Activated B cell treated with CpG ODN at 0.5 μM for 24 hours (primary cell): ENCODE measurements at regions of chr7 and their contacts with region 1.

Region 1: GRCh38 chr7:100889761-100890634 is 483 bp upstream of the UFSP1 start:
- DNase-seq: peak; percentile 89
- ATAC-seq: peak; percentile 85
- H3K4me3 Mint-ChIP-seq: peak overlapping the region; percentile 87
- H3K27ac Mint-ChIP-seq: peak overlapping the region; percentile 76
- H3K4me1 Mint-ChIP-seq: peaks cover 50% of the 10 kb centered on the region
- H3K27me3 Mint-ChIP-seq: peaks cover 23% of the 10 kb centered on the region
- CTCF ChIP-seq: no peak

Region 2: DNA sequence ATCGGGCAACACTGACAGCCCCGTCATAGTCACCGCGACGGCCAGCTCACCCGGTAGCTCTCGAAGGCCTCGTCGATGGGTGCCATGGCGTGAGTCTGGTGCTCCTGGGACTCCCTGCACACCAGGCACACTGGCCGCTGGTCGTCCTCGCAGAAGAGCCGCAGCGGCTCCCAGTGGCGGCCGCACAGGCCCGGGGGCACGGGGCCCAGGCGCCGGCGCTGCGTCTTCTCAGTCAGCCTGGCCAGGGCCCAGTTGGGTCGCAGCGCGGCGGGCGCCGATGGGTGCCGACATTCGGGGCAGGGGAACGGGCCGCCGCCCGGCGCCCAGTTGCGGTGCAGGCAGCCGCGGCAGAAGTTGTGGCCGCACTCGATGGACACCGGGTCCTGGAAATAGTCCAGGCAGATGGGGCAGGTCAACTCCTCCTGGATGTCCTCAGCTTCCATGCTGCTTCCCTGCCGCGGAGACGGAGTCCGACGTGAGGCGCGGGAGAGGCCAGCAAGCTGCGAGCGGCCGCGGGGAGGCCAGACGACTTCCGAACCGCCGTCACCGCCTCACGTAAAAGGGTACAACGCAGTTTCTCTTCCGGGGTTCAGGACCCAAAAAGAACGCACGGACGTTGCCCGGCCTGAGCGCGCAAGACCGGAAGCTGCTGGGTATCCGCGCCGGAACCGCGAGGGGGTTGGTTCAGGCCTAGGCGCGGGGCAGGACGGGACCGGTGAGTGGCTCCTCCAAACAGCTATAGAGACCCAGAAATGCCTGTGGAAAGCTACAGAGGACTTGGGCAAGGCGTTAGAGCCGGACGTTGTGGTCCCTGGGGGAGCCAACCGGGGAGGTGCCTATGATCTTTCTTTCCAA is 970.8 kb before region 1 on chr7 and contains the start of gene TRIM4:
- CTCF ChIA-PET with region 1: no interaction called
- POLR2A ChIA-PET with region 1: no interaction called
- intact Hi-C with region 1: loop called (anchors 2 kb)
- DNase-seq: peak; percentile 80
- ATAC-seq: peak; percentile 97
- H3K4me3 Mint-ChIP-seq: peak within 1 kb of the TSS; percentile 94
- H3K27ac Mint-ChIP-seq: peak within 1 kb of the TSS; percentile 93
- H3K4me1 Mint-ChIP-seq: peaks cover 49% of the 10 kb centered on the region
- H3K27me3 Mint-ChIP-seq: no peaks in the 10 kb centered on the region
- CTCF ChIP-seq: no peak
- total RNA-seq, gene TRIM4: 33.1 and 35.8 TPM in 2 replicates

Region 3: GRCh38 chr7:100688326-100688860 is 201.6 kb before region 1 on chr7:
- CTCF ChIA-PET with region 1: no interaction called
- POLR2A ChIA-PET with region 1: no interaction called
- intact Hi-C with region 1: no loop called
- DNase-seq: no peak
- ATAC-seq: no peak
- H3K4me3 Mint-ChIP-seq: no peak overlapping the region
- H3K27ac Mint-ChIP-seq: no peak overlapping the region
- H3K4me1 Mint-ChIP-seq: peaks cover 33% of the 10 kb centered on the region
- H3K27me3 Mint-ChIP-seq: no peaks in the 10 kb centered on the region
- CTCF ChIP-seq: no peak

Region 4: GRCh38 chr7:100773491-100773890 is 116.5 kb before region 1 on chr7:
- CTCF ChIA-PET with region 1: no interaction called
- POLR2A ChIA-PET with region 1: no interaction called
- intact Hi-C with region 1: no loop called
- DNase-seq: no peak
- ATAC-seq: no peak
- H3K4me3 Mint-ChIP-seq: no peak overlapping the region
- H3K27ac Mint-ChIP-seq: no peak overlapping the region
- H3K4me1 Mint-ChIP-seq: no peaks in the 10 kb centered on the region
- H3K27me3 Mint-ChIP-seq: peaks cover 17% of the 10 kb centered on the region
- CTCF ChIP-seq: no peak

Region 5: GRCh38 chr7:100874577-100875355 is 15.2 kb before region 1 on chr7 and contains the start of gene SRRT:
- CTCF ChIA-PET with region 1: interaction called, 8 read pairs
- POLR2A ChIA-PET with region 1: interaction called, 254 read pairs
- intact Hi-C with region 1: loop called (anchors 1 kb)
- DNase-seq: peak; percentile 96
- ATAC-seq: peak; percentile 96
- H3K4me3 Mint-ChIP-seq: peak within 1 kb of the TSS; percentile 99
- H3K27ac Mint-ChIP-seq: peak within 1 kb of the TSS; percentile 98
- H3K4me1 Mint-ChIP-seq: peaks cover 45% of the 10 kb centered on the region
- H3K27me3 Mint-ChIP-seq: no peaks in the 10 kb centered on the region
- CTCF ChIP-seq: no peak
- total RNA-seq, gene SRRT: 229 and 244 TPM in 2 replicates

Region 6: GRCh38 chr7:101085162-101085987 is 195.4 kb after region 1 on chr7 and contains the start of gene TRIM56:
- CTCF ChIA-PET with region 1: no interaction called
- POLR2A ChIA-PET with region 1: interaction called, 17 read pairs
- intact Hi-C with region 1: no loop called
- DNase-seq: peak; percentile 69
- ATAC-seq: peak; percentile 99
- H3K4me3 Mint-ChIP-seq: peak within 1 kb of the TSS; percentile 99
- H3K27ac Mint-ChIP-seq: peak within 1 kb of the TSS; percentile 97
- H3K4me1 Mint-ChIP-seq: peaks cover 24% of the 10 kb centered on the region
- H3K27me3 Mint-ChIP-seq: no peaks in the 10 kb centered on the region
- CTCF ChIP-seq: no peak
- total RNA-seq, gene TRIM56: 53.0 and 57.5 TPM in 2 replicates

Region 7: DNA sequence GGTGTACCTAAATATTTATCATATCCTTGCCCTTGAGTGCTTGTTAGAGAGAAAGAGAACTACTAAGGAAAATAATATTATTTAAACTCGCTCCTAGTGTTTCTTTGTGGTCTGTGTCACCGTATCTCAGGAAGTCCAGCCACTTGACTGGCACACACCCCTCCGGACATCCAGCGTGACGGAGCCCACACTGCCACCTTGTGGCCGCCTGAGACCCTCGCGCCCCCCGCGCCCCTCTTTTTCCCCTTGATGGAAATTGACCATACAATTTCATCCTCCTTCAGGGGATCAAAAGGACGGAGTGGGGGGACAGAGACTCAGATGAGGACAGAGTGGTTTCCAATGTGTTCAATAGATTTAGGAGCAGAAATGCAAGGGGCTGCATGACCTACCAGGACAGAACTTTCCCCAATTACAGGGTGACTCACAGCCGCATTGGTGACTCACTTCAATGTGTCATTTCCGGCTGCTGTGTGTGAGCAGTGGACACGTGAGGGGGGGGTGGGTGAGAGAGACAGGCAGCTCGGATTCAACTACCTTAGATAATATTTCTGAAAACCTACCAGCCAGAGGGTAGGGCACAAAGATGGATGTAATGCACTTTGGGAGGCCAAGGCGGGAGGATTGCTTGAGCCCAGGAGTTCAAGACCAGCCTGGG is 248.3 kb after region 1 on chr7:
- CTCF ChIA-PET with region 1: interaction called, 3 read pairs
- POLR2A ChIA-PET with region 1: no interaction called
- intact Hi-C with region 1: loop called (anchors 1 kb)
- DNase-seq: peak; percentile 49
- ATAC-seq: peak; percentile 93
- H3K4me3 Mint-ChIP-seq: peak overlapping the region; percentile 70
- H3K27ac Mint-ChIP-seq: peak overlapping the region; percentile 80
- H3K4me1 Mint-ChIP-seq: peaks cover 26% of the 10 kb centered on the region
- H3K27me3 Mint-ChIP-seq: peaks cover 21% of the 10 kb centered on the region
- CTCF ChIP-seq: peak; percentile 66

Region 8: DNA sequence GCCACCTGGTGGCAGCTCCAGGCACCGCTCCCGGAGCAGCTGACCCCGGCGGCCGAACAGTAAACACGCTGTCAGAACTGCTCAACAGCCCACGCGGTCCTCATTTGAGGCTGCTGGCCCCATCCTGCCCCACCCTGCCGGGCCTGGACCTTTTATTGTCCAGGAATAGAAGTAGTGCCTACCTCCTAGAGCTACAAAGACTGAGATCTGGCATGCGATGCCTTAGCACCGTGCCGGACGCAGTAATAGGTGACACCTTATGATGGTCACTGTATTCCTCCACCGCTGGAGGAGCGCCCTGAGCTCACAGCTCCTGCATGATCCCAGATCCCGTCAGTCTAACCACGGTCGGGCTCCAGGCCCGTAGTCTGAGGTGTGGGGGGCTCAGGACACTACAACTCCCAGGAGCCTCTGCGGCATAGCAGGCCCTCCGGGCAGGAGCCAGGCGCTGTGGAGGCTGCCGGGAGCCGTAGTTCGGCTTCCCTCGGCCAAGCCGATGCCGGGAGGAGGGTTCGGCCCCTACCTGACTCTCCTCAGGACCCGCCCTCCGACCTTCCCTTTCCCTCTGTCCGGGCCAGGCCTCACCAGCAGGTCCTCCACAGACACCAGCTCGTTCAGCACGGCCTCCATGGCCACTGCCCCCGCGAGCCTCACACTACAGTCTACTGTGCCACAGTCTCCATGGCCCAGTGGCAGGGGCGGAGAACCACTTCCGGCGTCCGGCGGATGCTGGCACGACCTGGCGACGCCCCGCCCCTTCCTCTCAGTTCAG is 354.6 kb after region 1 on chr7 and contains the start of gene FIS1:
- CTCF ChIA-PET with region 1: no interaction called
- POLR2A ChIA-PET with region 1: interaction called, 7 read pairs
- intact Hi-C with region 1: loop called (anchors 1 kb)
- DNase-seq: peak; percentile 96
- ATAC-seq: peak; percentile 94
- H3K4me3 Mint-ChIP-seq: peak within 1 kb of the TSS; percentile 95
- H3K27ac Mint-ChIP-seq: peak within 1 kb of the TSS; percentile 95
- H3K4me1 Mint-ChIP-seq: peaks cover 42% of the 10 kb centered on the region
- H3K27me3 Mint-ChIP-seq: no peaks in the 10 kb centered on the region
- CTCF ChIP-seq: no peak
- total RNA-seq, gene FIS1: 113 and 117 TPM in 2 replicates